Gastrocnemius medialis (tissue), 4 donors: ENCODE measurements at regions of chr5 and their contacts with region 1.

Region 1: GRCh38 chr5:39080597-39081204 is 6.5 kb upstream of the RICTOR start:
- DNase-seq: peak; percentile 22 to 39
- ATAC-seq: peak; percentile 75 to 91
- H3K4me3 ChIP-seq: no peak overlapping the region
- H3K27ac ChIP-seq: no peak overlapping the region
- H3K4me1 ChIP-seq: peaks cover 7 to 12% of the 10 kb centered on the region in 2 donors
- H3K27me3 ChIP-seq: no peaks in the 10 kb centered on the region
- CTCF ChIP-seq: peak; percentile 72 to 84 (median 82)
- POLR2A ChIP-seq: no peak

Region 2: GRCh38 chr5:38994324-38994927 is 86.3 kb before region 1 on chr5:
- in situ Hi-C with region 1: loop called in 3 of 4 experiments (anchors 5 to 10 kb)
- intact Hi-C with region 1: loop called (anchors 1 kb)
- DNase-seq: peak in 1 of 2 donors; percentile 24
- ATAC-seq: peak; percentile 81 to 84
- H3K4me3 ChIP-seq: no peak overlapping the region
- H3K27ac ChIP-seq: no peak overlapping the region
- H3K4me1 ChIP-seq: peaks cover 7 to 15% of the 10 kb centered on the region in 2 donors
- H3K27me3 ChIP-seq: no peaks in the 10 kb centered on the region
- CTCF ChIP-seq: peak in 4 of 5 experiments; percentile 31 to 55 (median 42)
- POLR2A ChIP-seq: no peak

Region 3: GRCh38 chr5:39005566-39006232 is 75.0 kb before region 1 on chr5:
- in situ Hi-C with region 1: loop called in 1 of 4 experiments (anchors 5 kb)
- intact Hi-C with region 1: loop called (anchors 2 kb)
- DNase-seq: no peak
- ATAC-seq: peak; percentile 69 to 71
- H3K4me3 ChIP-seq: no peak overlapping the region
- H3K27ac ChIP-seq: peak overlapping the region in 1 of 4 donors; percentile 18
- H3K4me1 ChIP-seq: peaks cover 0 to 5% of the 10 kb centered on the region in 2 donors
- H3K27me3 ChIP-seq: no peaks in the 10 kb centered on the region
- CTCF ChIP-seq: peak; percentile 16 to 53 (median 48)
- POLR2A ChIP-seq: no peak

Region 4: DNA sequence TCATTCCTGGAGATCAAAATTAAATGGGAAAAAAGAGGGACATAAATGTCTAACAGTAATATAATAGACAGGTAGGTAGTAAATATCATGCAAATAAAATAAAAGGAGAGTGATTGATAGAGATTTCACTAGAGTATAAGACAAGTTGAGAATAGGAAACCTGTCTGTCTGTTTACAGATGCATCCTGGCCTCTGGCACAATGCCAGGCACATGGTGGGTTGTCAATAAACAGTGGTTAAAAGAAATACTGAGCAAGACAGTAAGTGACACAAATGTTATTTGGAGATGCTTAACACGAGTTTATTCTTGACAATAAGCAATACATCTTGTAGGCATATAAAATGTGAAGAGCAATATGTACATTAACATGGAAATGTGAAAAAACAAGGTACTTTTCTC is 39.8 kb before region 1 on chr5:
- in situ Hi-C with region 1: no loop called
- intact Hi-C with region 1: no loop called
- DNase-seq: no peak
- ATAC-seq: no peak
- H3K4me3 ChIP-seq: no peak overlapping the region
- H3K27ac ChIP-seq: no peak overlapping the region
- H3K4me1 ChIP-seq: peaks cover 20 to 33% of the 10 kb centered on the region in 2 donors
- H3K27me3 ChIP-seq: no peaks in the 10 kb centered on the region
- CTCF ChIP-seq: no peak
- POLR2A ChIP-seq: no peak